ENCODE measurements at regions of chr5 and their contacts with region 1.

Region 1: GRCh38 chr5:52948418-52949076 is 40.6 kb upstream of the ITGA2 start:
- DNase-seq: no peak
- H3K4me3 ChIP-seq: no peak overlapping the region
- H3K27ac ChIP-seq: peak overlapping the region in 6 of 8 donors; percentile 6 to 41 (median 32)
- H3K4me1 ChIP-seq: peaks cover 0 to 57% (median 41%) of the 10 kb centered on the region in 6 donors
- H3K27me3 ChIP-seq: no peaks in the 10 kb centered on the region
- CTCF ChIP-seq: peak; percentile 34 to 81 (median 70)
- POLR2A ChIP-seq: no peak

Region 2: DNA sequence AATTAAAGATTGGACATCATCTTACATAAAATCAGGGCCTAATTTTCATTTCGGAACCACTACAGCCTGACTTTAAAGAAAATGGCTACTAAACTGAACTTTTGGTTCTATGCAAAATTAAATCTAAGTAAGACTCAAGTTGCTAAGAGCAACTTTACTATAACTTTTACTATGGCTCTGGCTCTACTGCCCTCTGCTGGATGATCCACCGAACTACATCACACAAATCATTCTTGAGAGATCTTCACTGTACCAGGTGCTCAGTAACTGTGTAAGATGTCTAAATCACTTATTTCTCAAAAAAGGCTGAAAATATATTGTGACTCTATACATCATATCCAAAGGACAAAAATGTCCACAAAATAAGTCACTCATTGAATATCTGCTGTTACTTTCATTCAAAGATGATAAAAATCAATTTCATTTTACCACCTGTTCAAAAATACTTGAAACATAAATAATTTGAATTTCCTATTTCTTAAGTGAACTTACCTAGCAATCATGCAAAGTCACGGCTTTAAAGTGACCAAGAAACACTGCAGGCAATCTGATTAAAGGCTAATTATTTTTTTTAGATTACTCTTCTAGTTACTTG is 147.5 kb after region 1 on chr5:
- intact Hi-C with region 1: loop called (anchors 2 kb)
- DNase-seq: no peak
- H3K4me3 ChIP-seq: no peak overlapping the region
- H3K27ac ChIP-seq: no peak overlapping the region
- H3K4me1 ChIP-seq: no peaks in the 10 kb centered on the region
- H3K27me3 ChIP-seq: no peaks in the 10 kb centered on the region
- CTCF ChIP-seq: peak; percentile 61 to 86 (median 81)
- POLR2A ChIP-seq: no peak

Measured in spleen (tissue), 13 donors.